ENCODE measurements at regions of chr1 and their contacts with region 1.

Region 1: GRCh38 chr1:91885716-91886506 is at the start of gene TGFBR3:
- DNase-seq: peak; percentile 94 to 96
- ATAC-seq: peak; percentile 94 to 98 (median 97)
- H3K4me3 ChIP-seq: peak within 1 kb of the TSS; percentile 78 to 100 (median 91)
- H3K27ac ChIP-seq: peak within 1 kb of the TSS; percentile 88 to 98 (median 92)
- H3K4me1 ChIP-seq: peaks cover 0 to 52% (median 27%) of the 10 kb centered on the region in 9 donors
- H3K27me3 ChIP-seq: peaks cover 0 to 44% (median 0%) of the 10 kb centered on the region in 7 donors
- CTCF ChIP-seq: peak; percentile 20 to 74 (median 56)
- total RNA-seq, gene TGFBR3: 11.9 to 36.7 (median 26.4) TPM

Region 2: GRCh38 chr1:91635763-91636162 is 250.1 kb before region 1 on chr1:
- intact Hi-C with region 1: no loop called
- DNase-seq: no peak
- ATAC-seq: peak in 1 of 8 donors; percentile 35
- H3K4me3 ChIP-seq: no peak overlapping the region
- H3K27ac ChIP-seq: no peak overlapping the region
- H3K4me1 ChIP-seq: peaks cover 0 to 6% (median 0%) of the 10 kb centered on the region in 9 donors
- H3K27me3 ChIP-seq: no peaks in the 10 kb centered on the region
- CTCF ChIP-seq: no peak

Region 3: GRCh38 chr1:91684481-91685196 is 201.3 kb before region 1 on chr1:
- intact Hi-C with region 1: loop called in 1 of 10 experiments (anchors 10 kb)
- DNase-seq: peak in 1 of 2 donors; percentile 19
- ATAC-seq: peak in 7 of 8 donors; percentile 31 to 66 (median 59)
- H3K4me3 ChIP-seq: no peak overlapping the region
- H3K27ac ChIP-seq: peak overlapping the region in 6 of 10 donors; percentile 3 to 59 (median 38)
- H3K4me1 ChIP-seq: peaks cover 0 to 57% (median 44%) of the 10 kb centered on the region in 9 donors
- H3K27me3 ChIP-seq: no peaks in the 10 kb centered on the region
- CTCF ChIP-seq: no peak

Region 4: GRCh38 chr1:91707114-91707889 is 178.6 kb before region 1 on chr1:
- intact Hi-C with region 1: loop called in 4 of 10 experiments (anchors 5 to 10 kb)
- DNase-seq: peak; percentile 42 to 61
- ATAC-seq: peak; percentile 68 to 94 (median 86)
- H3K4me3 ChIP-seq: no peak overlapping the region
- H3K27ac ChIP-seq: peak overlapping the region; percentile 1 to 81 (median 66)
- H3K4me1 ChIP-seq: peaks cover 3 to 69% (median 22%) of the 10 kb centered on the region in 9 donors
- H3K27me3 ChIP-seq: no peaks in the 10 kb centered on the region
- CTCF ChIP-seq: no peak

Region 5: DNA sequence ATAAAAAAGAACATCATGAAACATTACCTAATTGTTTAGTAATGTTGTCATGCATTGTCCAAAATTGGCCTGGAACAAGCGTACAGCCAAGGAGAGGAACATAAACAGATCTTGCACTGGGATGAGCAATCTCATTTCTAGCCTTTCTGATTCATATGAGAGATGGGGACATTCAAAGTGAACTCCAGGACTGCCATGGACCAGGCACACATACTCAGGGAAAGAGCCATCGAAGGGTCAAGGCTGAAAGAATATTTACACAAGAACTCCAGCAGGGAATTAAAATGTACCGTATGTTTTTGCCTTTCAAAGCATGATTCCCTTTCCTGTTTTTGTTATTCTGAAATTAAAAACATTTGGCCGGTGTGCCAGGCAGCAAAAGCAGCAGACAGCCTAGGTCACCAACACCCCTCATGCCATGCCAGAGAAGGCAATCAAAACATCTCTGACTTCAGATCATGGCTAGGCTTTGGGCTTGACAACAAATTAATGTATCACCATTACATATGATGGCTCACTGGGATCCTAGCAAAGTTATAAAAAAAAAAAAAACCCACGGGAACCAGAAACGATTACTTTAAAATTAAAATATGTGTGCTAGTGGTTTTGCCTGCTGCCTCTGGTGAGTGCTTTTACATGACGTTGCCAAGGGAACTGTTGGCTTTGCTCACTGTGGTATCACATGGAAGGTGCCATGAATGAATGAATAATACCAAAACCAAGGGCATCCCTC is 159.8 kb before region 1 on chr1:
- intact Hi-C with region 1: loop called in 1 of 10 experiments (anchors 10 kb)
- DNase-seq: no peak
- ATAC-seq: peak; percentile 20 to 94 (median 77)
- H3K4me3 ChIP-seq: no peak overlapping the region
- H3K27ac ChIP-seq: peak overlapping the region; percentile 36 to 86 (median 74)
- H3K4me1 ChIP-seq: peaks cover 12 to 60% (median 46%) of the 10 kb centered on the region in 9 donors
- H3K27me3 ChIP-seq: no peaks in the 10 kb centered on the region
- CTCF ChIP-seq: no peak

Region 6: DNA sequence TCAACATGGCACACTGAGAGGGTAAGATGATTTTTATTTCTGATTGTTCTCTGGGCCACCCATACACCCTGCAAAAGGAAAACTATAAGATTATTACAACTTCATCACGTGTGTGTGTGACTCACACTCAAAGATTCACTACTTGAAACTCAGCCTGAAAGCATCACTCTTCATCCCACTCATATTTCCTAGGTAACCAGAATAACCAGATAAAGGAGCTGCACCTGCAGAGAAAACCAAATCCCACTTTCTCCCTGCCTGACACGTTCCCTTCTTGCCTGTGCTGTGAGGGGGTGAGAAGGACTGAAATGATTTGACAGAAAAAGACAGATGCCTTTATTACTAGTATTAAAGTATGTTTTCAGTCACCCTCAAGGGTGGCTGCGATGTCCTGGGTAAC is 131.6 kb before region 1 on chr1:
- intact Hi-C with region 1: loop called in 2 of 10 experiments (anchors 10 kb)
- DNase-seq: no peak
- ATAC-seq: no peak
- H3K4me3 ChIP-seq: no peak overlapping the region
- H3K27ac ChIP-seq: peak overlapping the region in 9 of 10 donors; percentile 6 to 71 (median 43)
- H3K4me1 ChIP-seq: peaks cover 6 to 65% (median 47%) of the 10 kb centered on the region in 9 donors
- H3K27me3 ChIP-seq: no peaks in the 10 kb centered on the region
- CTCF ChIP-seq: no peak

Region 7: GRCh38 chr1:91819038-91819788 is 66.7 kb before region 1 on chr1:
- intact Hi-C with region 1: loop called in 1 of 10 experiments (anchors 10 kb)
- DNase-seq: no peak
- ATAC-seq: peak in 7 of 8 donors; percentile 23 to 75 (median 56)
- H3K4me3 ChIP-seq: no peak overlapping the region
- H3K27ac ChIP-seq: peak overlapping the region in 4 of 10 donors; percentile 19 to 49 (median 38)
- H3K4me1 ChIP-seq: peaks cover 0 to 61% (median 49%) of the 10 kb centered on the region in 9 donors
- H3K27me3 ChIP-seq: no peaks in the 10 kb centered on the region
- CTCF ChIP-seq: no peak

Region 8: DNA sequence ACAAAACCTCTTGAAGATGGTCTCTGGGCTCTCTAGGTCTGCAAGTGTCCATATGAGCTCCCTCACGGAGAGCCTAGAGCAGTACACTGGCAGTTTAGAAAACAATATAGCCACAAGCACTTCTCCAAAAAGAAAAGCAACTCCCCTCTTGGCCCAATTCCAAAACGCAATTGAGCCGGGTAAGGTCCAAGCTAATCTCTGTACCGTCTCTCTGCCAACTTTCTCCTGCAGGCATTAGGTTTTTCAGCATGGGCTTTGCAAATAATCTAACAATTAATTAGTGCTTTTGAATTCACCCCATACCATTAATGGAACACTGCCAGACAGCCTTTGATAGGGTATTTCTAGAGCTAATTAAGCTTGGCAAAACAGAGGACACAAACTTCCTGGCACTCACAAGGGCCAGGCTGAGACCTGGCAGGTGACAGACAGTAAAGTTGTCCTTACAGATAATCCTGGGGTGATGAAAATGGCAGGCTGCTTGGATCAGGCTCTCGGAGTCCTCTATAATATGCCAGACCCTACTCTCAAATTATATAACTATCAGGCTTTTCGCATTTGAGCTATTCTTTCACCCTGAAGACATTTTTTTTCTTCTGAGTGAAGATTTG is 39.8 kb before region 1 on chr1:
- intact Hi-C with region 1: loop called in 2 of 10 experiments (anchors 5 kb)
- DNase-seq: peak in 1 of 2 donors; percentile 83
- ATAC-seq: peak; percentile 54 to 88 (median 76)
- H3K4me3 ChIP-seq: peak overlapping the region in 3 of 10 donors; percentile 6 to 15 (median 11)
- H3K27ac ChIP-seq: peak overlapping the region; percentile 32 to 84 (median 68)
- H3K4me1 ChIP-seq: peaks cover 13 to 50% (median 34%) of the 10 kb centered on the region in 9 donors
- H3K27me3 ChIP-seq: no peaks in the 10 kb centered on the region
- CTCF ChIP-seq: no peak